Activated naive CD4-positive, alpha-beta T cell treated with anti-CD3 and anti-CD28 coated beads for 36 hours (primary cell): ENCODE measurements at regions of chr16 and their contacts with region 1.

Region 1: GRCh38 chr16:57734925-57735754 is 430 bp upstream of the KATNB1 start:
- DNase-seq: peak; percentile 98
- H3K4me3 Mint-ChIP-seq: peak overlapping the region; percentile 91
- H3K27ac Mint-ChIP-seq: peak overlapping the region; percentile 96
- H3K4me1 Mint-ChIP-seq: peaks cover 19% of the 10 kb centered on the region
- H3K27me3 Mint-ChIP-seq: no peaks in the 10 kb centered on the region

Region 2: DNA sequence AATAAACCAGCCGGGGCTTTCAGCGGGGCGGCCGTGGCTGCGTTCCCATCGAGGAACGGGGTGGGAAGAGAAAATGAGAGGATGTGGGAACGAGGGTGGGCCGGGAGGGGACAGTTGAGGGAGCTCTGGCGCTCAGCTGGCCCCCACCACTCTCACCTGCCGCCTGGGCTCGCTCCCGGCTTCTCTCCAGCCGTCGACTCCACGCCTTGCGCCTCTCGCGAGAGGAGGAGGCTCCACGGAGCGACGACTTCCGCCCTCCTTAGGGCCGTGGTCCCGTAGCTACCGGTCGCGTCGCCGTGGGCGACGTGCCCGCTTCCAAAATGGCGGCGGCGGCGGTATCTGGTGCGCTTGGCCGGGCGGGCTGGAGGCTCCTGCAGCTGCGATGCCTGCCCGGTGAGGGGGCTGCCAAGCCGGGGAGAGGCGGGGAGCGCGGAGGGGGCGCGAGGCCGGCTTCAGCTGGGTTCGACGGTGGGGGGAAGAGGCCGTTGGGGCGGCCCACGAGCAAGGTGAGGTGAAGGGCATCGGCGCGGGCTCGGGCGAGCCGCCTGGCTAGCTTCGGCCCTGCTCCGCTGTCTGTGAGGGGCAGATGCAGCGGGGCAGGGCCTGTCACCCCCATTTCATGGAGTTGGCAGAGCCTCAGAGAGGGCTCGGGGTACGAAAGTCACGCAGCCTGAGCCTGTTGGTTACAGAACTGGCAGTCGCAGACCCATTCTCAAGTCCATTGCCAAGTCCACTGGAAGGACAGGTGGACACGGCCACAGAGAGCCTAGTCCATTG is 287.8 kb before region 1 on chr16 and contains the starts of genes CIAPIN1 and COQ9:
- CTCF ChIA-PET with region 1: no interaction called
- intact Hi-C with region 1: loop called (anchors 1 kb)
- DNase-seq: peak; percentile 96
- H3K4me3 Mint-ChIP-seq: peak within 1 kb of the TSS; percentile 86
- H3K27ac Mint-ChIP-seq: peak within 1 kb of the TSS; percentile 86
- H3K4me1 Mint-ChIP-seq: peaks cover 42% of the 10 kb centered on the region
- H3K27me3 Mint-ChIP-seq: no peaks in the 10 kb centered on the region
- total RNA-seq, gene CIAPIN1: 29.5 to 31.0 TPM
- total RNA-seq, gene COQ9: 30.6 TPM

Region 3: DNA sequence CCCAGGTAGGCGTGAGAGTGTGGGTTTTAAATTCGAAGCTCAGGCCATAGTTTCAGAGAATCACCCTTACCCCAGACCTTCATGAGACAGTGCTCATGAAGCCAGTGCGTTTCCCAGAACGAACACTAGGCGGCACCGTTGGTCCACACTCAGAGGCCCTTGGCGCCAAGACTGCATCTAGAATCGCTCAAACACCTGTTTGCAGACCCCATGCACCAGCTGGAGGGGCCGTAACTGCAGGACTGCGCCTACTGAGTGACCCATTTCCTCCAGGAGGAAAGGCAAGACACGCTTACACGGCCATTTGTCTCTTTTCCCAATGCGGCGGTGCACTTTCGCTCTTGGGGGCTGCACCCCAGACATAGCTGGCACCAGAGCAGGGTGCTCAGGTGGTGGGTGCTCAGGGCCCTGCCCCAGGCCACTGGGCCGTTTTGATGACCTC is 158.7 kb before region 1 on chr16:
- CTCF ChIA-PET with region 1: interaction called, 14 read pairs
- intact Hi-C with region 1: loop called (anchors 1 kb)
- DNase-seq: peak; percentile 94
- H3K4me3 Mint-ChIP-seq: no peak overlapping the region
- H3K27ac Mint-ChIP-seq: no peak overlapping the region
- H3K4me1 Mint-ChIP-seq: peaks cover 9% of the 10 kb centered on the region
- H3K27me3 Mint-ChIP-seq: peaks cover 3% of the 10 kb centered on the region

Region 4: GRCh38 chr16:57648590-57649442 is 86.3 kb before region 1 on chr16:
- CTCF ChIA-PET with region 1: interaction called, 11 read pairs
- intact Hi-C with region 1: loop called (anchors 1 kb)
- DNase-seq: peak; percentile 93
- H3K4me3 Mint-ChIP-seq: no peak overlapping the region
- H3K27ac Mint-ChIP-seq: peak overlapping the region; percentile 44
- H3K4me1 Mint-ChIP-seq: peaks cover 17% of the 10 kb centered on the region
- H3K27me3 Mint-ChIP-seq: no peaks in the 10 kb centered on the region

Region 5: GRCh38 chr16:57667526-57668258 is 67.4 kb before region 1 on chr16:
- CTCF ChIA-PET with region 1: no interaction called
- intact Hi-C with region 1: no loop called
- DNase-seq: no peak
- H3K4me3 Mint-ChIP-seq: no peak overlapping the region
- H3K27ac Mint-ChIP-seq: no peak overlapping the region
- H3K4me1 Mint-ChIP-seq: no peaks in the 10 kb centered on the region
- H3K27me3 Mint-ChIP-seq: no peaks in the 10 kb centered on the region

Region 6: DNA sequence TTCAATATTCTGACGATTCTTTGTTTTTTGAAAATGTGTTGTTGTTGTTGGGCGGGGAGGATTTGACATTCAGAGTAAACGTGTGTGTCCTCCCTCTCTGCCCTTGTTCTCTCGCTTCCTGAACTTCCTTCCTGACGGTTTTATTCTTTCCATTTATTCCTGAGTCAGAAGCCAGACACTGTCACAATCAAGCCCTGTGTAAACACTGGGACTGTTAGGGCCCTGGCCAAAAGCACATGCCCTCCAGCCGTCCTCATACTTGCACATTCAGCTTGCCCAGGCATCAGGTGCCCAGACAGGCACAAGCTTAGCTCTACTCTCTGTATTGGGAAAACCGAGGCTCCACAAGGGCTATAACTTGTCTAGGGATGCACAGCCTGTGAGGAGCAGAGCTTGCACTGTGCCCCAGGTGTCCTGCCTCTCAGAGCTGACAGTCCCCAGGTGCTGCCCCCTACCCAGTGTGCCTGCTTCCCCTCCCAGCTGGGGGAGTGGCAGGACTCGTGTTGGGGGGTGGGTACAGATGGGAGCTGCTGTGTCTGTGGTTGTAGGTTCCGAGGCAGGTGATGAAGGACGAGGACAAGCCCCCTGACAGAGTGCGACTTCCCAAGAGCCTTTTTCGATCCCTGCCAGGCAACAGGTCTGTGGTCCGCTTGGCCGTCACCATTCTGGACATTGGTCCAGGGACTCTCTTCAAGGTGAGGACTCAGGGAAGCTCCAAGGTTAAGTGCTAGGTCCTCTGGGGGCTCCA is 57.3 kb before region 1 on chr16:
- CTCF ChIA-PET with region 1: no interaction called
- intact Hi-C with region 1: no loop called
- DNase-seq: no peak
- H3K4me3 Mint-ChIP-seq: no peak overlapping the region
- H3K27ac Mint-ChIP-seq: no peak overlapping the region
- H3K4me1 Mint-ChIP-seq: no peaks in the 10 kb centered on the region
- H3K27me3 Mint-ChIP-seq: no peaks in the 10 kb centered on the region

Region 7: DNA sequence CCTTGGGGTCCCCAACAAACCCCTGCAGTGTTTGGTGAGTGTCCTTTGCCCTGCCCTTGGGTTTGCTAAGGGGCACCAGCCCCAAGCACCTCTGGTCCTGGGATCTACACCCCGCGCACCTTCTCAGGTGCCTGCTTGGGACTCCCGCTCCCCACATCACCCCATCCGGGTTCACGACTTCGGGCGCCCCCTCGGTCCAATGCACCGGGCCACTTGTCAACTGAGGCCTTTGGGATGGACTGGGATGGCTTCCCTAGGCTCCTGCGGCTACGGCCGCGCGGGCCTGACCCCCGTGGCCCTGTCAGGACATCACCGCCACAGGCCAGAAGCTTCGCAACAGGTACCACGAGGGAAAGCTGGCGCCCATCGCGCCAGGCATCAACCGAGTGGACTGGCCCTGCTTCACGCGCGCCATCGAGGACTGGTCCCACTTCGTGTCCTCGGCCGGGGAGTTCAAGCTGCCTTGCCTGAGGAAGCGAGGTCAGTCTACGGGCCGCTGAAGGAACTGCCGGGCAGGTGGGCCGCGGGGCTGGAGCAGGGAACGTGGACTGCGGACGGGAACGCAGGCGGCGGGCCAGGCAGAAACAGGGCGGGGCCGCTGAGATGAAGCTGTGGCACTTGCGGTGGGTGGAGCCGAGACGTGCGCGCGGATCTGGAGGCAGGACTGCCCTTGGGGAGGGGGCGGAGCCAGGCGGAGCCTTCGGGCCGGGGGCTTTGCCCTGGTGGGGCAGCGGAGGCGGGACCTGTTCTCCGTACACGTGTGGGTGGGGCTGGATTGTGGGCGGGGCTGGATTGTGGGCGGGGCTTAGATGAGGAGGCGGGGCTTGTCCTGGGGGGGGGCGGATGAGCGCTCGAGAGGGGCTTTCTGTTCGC is 249.4 kb after region 1 on chr16:
- CTCF ChIA-PET with region 1: interaction called, 3 read pairs
- intact Hi-C with region 1: loop called (anchors 1 kb)
- DNase-seq: peak; percentile 95
- H3K4me3 Mint-ChIP-seq: peak overlapping the region; percentile 83
- H3K27ac Mint-ChIP-seq: no peak overlapping the region
- H3K4me1 Mint-ChIP-seq: peaks cover 9% of the 10 kb centered on the region
- H3K27me3 Mint-ChIP-seq: no peaks in the 10 kb centered on the region

Region 8: DNA sequence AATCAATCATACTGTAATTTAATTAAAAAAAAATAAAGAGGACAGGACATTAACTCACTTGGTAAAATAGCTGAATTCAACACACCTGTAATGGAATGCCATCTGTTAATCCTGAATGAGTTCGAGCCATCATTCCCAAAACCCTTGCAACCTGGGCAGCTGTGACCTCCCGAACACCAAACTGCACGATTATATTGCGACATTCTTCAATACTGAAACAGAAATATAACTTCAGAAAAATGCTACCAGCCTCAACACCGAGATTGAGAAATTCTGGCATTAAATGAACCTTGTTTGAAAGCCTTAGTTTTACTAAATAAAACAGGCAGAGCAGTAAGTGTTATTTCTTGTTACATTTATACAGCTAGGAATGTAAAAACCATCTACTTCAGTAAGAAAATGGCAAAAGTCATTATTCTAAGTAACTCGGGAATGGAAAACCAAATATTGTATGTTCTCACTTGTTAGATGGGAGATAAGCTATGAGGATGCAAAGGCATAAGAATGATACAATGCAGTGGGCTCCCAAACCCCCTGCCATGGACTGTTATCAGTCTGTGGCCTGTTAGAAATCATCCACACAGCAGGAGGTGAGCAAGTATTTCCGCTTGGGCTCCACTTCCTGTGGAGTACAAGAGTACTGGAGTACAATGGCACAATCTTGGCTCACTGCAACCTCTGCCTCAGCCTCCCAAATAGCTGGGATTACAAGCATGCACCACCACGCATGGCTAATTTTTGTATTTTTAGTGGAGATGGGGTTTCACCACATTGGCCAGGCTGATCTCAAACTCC is 848.0 kb after region 1 on chr16:
- CTCF ChIA-PET with region 1: no interaction called
- intact Hi-C with region 1: loop called (anchors 5 kb)
- DNase-seq: peak; percentile 12
- H3K4me3 Mint-ChIP-seq: no peak overlapping the region
- H3K27ac Mint-ChIP-seq: no peak overlapping the region
- H3K4me1 Mint-ChIP-seq: peaks cover 11% of the 10 kb centered on the region
- H3K27me3 Mint-ChIP-seq: no peaks in the 10 kb centered on the region